Right ventricle myocardium inferior (tissue), 1 donor: ENCODE measurements at regions of chr6 and their contacts with region 1.

Region 1: DNA sequence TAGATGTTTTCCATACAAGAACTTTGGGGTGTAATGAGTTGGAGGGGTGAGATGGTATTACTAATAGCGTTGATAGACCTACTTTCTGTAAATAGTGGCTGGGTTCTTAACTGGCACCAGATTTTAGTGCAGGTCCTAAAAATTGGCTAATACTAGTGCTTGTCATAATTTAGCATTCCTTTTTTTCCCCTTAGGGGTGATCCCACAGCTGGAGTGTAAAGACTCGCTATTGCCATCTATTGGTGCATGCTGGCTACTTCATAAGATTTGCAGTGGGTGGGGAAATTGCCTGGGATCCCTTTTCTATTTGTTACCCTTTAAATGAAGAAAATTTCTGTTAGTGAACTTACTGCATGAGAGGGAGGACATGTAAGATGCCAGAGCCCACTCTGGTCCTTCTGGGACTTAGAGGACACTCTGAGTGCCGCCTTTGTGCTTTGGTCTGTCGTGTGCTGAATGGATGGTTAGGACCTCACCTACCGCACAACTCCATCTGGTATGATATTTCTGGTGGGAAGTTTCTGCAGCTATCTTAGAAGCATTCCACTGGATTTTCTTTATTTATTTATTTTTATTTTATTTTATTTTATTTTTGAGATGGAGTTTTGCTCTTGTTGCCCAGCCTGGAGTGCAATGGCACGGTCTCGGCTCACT is 195.5 kb downstream of the JARID2 start:
- DNase-seq: no peak
- ATAC-seq: peak; percentile 84

Region 2: DNA sequence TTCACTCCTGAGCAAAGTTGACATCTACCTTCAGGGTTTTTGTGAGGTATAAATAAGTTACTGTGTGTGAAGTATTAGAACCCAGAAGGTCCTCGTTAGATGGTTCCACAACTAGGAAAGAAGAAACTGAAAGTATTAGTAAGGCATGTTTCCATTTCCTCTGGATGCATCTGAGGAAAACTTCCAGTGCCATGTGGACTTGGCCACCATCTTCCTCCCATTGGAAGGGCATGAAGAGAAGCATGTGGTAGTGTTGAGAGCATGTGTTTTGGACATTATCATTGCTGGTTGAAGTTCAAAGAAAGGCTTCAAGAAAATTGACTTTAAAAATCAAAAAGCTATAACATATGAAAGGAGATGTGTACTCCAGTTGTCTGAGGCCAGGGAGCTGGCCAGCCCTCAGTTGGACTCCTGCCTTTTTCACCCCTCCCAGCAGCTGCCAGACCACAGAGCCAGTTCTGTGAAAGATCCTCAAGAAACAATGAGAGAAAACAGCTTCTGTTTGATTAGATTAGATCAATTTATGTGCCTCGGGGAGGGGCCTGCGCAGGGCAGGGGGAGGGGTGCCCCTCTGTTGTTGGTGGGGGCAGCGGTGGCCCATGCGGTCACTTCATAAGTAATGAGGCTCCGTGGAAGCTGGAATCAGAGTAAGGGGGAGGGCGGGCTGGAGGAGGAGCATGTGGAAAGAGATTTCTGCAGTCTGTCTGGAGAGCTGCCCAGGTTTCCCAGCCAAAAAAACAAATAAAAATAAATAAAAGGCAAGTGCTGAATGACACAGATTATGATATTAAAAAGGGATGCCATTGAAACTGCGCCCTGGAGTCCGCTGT is 41.5 kb before region 1 on chr6:
- intact Hi-C with region 1: loop called (anchors 5 kb)
- DNase-seq: peak; percentile 79
- ATAC-seq: peak; percentile 89

Region 3: GRCh38 chr6:15485936-15486335 is 44.6 kb after region 1 on chr6:
- intact Hi-C with region 1: loop called (anchors 5 kb)
- DNase-seq: no peak
- ATAC-seq: no peak